K562 (cell line): ENCODE measurements at regions of chr7 and their contacts with region 1.

Region 1: DNA sequence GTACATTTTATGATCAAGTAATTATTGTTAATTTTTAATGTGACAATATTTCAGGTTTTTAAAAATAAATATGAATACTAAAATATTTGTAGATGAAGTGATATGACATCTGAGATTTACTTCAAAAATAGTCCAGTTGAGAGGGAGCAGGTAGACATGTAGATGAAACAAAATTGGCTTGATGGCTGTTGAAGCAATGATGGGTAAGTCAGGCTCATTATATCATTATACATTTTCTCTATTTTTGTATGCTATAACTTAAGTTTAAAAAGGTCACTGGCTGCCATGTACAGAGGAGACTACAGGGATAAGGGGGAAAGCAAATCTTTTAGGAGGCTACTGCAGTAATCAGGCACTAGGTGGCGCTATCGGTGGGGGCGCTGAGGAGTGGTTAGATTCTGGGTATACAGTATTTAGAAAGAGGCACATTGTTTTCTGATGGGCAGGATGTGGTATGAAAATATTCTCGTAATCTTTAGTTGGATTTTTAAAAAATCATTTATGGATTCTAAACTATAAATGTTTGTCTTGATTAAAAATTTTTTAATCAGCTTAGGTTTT is 189.8 kb upstream of the IMMP2L start:
- DNase-seq: peak; percentile 85 to 93 (median 89)
- ATAC-seq: peak; percentile 99
- H3K4me3 ChIP-seq: no peak overlapping the region
- H3K27ac ChIP-seq: no peak overlapping the region
- H3K4me1 ChIP-seq: no peaks in the 10 kb centered on the region
- H3K27me3 ChIP-seq: peaks cover 3 to 9% of the 10 kb centered on the region in 2 experiments; a peak in 1 of 5 replicates
- CTCF ChIP-seq: peak; percentile 95 to 98 (median 96)
- EP300 ChIP-seq: no peak
- POLR2A ChIP-seq: no peak
- RAD21 ChIP-seq: peak; percentile 73 to 88

Region 2: GRCh38 chr7:111486472-111487142 is 265.5 kb before region 1 on chr7:
- CTCF ChIA-PET with region 1: interaction called, 4 read pairs
- POLR2A ChIA-PET with region 1: interaction called, 3 read pairs
- in situ Hi-C with region 1: no loop called
- intact Hi-C with region 1: loop called (anchors 5 kb)
- DNase-seq: peak; percentile 40 to 87 (median 60)
- ATAC-seq: peak; percentile 90
- H3K4me3 ChIP-seq: no peak overlapping the region
- H3K27ac ChIP-seq: no peak overlapping the region; the same call in 2 of the 3 replicates
- H3K4me1 ChIP-seq: no peaks in the 10 kb centered on the region
- H3K27me3 ChIP-seq: no peaks in the 10 kb centered on the region
- CTCF ChIP-seq: peak; percentile 73 to 96 (median 81)
- EP300 ChIP-seq: peak; percentile 44; the same call in 1 of the 2 replicates
- POLR2A ChIP-seq: no peak
- RAD21 ChIP-seq: peak; percentile 97 to 98

Region 3: GRCh38 chr7:111855161-111855856 is 103.2 kb after region 1 on chr7:
- CTCF ChIA-PET with region 1: no interaction called
- POLR2A ChIA-PET with region 1: no interaction called
- in situ Hi-C with region 1: no loop called
- intact Hi-C with region 1: loop called (anchors 5 kb)
- DNase-seq: peak in 2 of 4 experiments; percentile 19 to 40
- ATAC-seq: peak; percentile 86
- H3K4me3 ChIP-seq: no peak overlapping the region
- H3K27ac ChIP-seq: no peak overlapping the region
- H3K4me1 ChIP-seq: no peaks in the 10 kb centered on the region
- H3K27me3 ChIP-seq: peaks cover 4 to 10% of the 10 kb centered on the region in 2 experiments; a peak in 2 of 5 replicates
- CTCF ChIP-seq: peak; percentile 59 to 62 (median 60)
- EP300 ChIP-seq: no peak
- POLR2A ChIP-seq: no peak
- RAD21 ChIP-seq: peak in 1 of 2 experiments; percentile 43; a peak in 2 of 4 replicates

Region 4: DNA sequence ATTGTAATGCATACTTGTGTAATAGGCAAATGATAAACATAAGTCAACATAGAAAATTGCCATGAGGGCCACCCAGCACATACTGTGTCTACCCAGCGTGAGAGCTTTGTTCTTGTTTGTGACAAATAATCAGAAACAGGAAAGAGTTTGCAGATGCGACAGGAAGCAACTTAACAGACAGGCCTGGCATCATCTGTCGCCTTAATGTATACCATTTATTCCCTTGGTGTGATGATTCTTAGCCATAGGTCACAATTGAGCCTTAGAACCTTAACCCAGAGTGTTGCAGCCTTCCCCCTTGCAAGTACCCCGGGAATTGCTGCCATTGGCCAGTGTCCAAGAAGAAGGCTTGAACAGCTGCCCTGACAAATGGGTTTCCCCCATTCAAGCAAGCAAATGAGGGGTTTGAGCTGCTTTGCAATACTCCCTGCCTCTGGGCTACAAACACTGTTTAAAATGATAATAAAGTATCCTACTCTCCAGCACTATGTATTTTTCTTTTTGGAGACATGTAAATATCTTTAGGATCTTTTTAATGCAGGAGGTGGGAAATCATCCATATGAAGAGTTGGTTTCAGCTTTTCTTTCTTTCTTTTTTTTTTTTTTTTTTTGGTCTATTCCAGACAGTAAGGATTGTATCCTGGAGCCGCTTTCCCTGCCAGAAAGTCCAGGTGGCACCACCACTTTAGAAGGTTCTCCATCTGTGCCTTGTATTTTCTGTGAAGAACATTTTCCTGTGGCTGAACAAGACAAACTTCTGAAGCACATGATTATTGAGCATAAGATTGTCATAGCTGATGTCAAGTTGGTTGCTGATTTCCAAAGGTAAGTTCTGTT is 534.4 kb after region 1 on chr7:
- CTCF ChIA-PET with region 1: no interaction called
- POLR2A ChIA-PET with region 1: no interaction called
- in situ Hi-C with region 1: no loop called
- intact Hi-C with region 1: no loop called
- DNase-seq: no peak
- ATAC-seq: no peak
- H3K4me3 ChIP-seq: no peak overlapping the region
- H3K27ac ChIP-seq: no peak overlapping the region
- H3K4me1 ChIP-seq: 0 out of 5 replicates have a peak, but pooled peaks cover 0 to under 1% of the 10 kb centered on the region in 2 experiments
- H3K27me3 ChIP-seq: no peaks in the 10 kb centered on the region
- CTCF ChIP-seq: no peak
- EP300 ChIP-seq: no peak
- POLR2A ChIP-seq: no peak
- RAD21 ChIP-seq: no peak

Region 5: DNA sequence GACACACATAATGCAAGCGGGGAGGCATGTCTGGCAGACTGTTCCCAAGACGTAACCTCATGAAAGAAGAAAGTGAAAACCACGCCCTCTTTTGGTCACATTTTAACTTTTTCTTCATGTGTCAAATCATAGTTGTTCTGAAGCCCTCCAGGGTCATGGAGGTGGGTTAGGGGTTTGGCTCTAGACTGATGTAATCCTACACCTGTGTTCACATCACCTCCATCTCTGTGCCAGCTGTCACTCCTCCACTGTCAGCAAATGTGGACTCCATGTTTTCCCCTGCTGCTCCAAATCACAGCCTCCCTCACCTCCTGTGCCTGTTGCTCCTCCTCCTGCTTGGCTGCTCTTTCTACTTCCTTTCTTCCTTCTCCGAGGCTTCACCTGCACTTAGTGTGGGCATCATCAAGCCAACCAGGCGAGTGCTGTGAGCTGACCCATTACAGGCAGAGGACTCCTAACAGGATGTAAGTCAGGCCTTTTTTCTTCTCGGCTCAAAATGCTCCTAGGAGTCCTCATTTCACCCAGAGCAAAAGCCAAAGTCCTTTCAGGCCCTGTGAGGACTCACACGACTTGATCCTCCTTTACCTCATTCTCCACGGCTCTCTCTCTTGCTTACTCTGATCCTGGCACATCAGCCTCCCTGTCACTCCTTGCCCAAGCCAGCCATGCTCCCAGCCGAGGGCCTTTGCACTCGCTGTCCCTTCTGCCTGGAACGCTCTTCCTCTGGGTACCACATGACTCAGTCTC is 631.7 kb after region 1 on chr7:
- CTCF ChIA-PET with region 1: no interaction called
- POLR2A ChIA-PET with region 1: no interaction called
- in situ Hi-C with region 1: no loop called
- intact Hi-C with region 1: no loop called
- DNase-seq: peak in 1 of 4 experiments; percentile 61
- ATAC-seq: peak; percentile 87
- H3K4me3 ChIP-seq: no peak overlapping the region
- H3K27ac ChIP-seq: no peak overlapping the region
- H3K4me1 ChIP-seq: no peaks in the 10 kb centered on the region
- H3K27me3 ChIP-seq: peaks cover 0 to 19% of the 10 kb centered on the region in 2 experiments; a peak in 4 of 5 replicates
- CTCF ChIP-seq: peak; percentile 3 to 50 (median 45); a peak in 4 of 6 replicates
- EP300 ChIP-seq: no peak
- POLR2A ChIP-seq: no peak
- RAD21 ChIP-seq: peak; percentile 27 to 60; a peak in 3 of 4 replicates

Region 6: GRCh38 chr7:112398534-112398933 is 646.4 kb after region 1 on chr7:
- CTCF ChIA-PET with region 1: no interaction called
- POLR2A ChIA-PET with region 1: no interaction called
- in situ Hi-C with region 1: loop called (anchors 10 kb)
- intact Hi-C with region 1: no loop called
- DNase-seq: peak in 2 of 4 experiments; percentile 52 to 73
- ATAC-seq: peak; percentile 87
- H3K4me3 ChIP-seq: no peak overlapping the region
- H3K27ac ChIP-seq: no peak overlapping the region
- H3K4me1 ChIP-seq: peaks cover 0 to 9% of the 10 kb centered on the region in 2 experiments; a peak in 3 of 5 replicates
- H3K27me3 ChIP-seq: peaks cover 4 to 14% of the 10 kb centered on the region in 2 experiments; a peak in 3 of 5 replicates
- CTCF ChIP-seq: no peak
- EP300 ChIP-seq: peak; percentile 21; the same call in 1 of the 2 replicates
- POLR2A ChIP-seq: no peak
- RAD21 ChIP-seq: no peak

Region 7: GRCh38 chr7:112898432-112899290 is 1146.6 kb after region 1 on chr7:
- CTCF ChIA-PET with region 1: no interaction called
- POLR2A ChIA-PET with region 1: no interaction called
- in situ Hi-C with region 1: loop called (anchors 25 kb)
- intact Hi-C with region 1: loop called (anchors 2 kb)
- DNase-seq: peak; percentile 68 to 86 (median 72)
- ATAC-seq: peak; percentile 99
- H3K4me3 ChIP-seq: no peak overlapping the region
- H3K27ac ChIP-seq: no peak overlapping the region
- H3K4me1 ChIP-seq: no peaks in the 10 kb centered on the region; a peak in 1 of 5 replicates
- H3K27me3 ChIP-seq: no peaks in the 10 kb centered on the region
- CTCF ChIP-seq: peak; percentile 88 to 95 (median 91)
- EP300 ChIP-seq: no peak
- POLR2A ChIP-seq: no peak
- RAD21 ChIP-seq: peak; percentile 94 to 97